B cell (primary cell): ENCODE measurements at regions of chr12 and their contacts with region 1.

Region 1: DNA sequence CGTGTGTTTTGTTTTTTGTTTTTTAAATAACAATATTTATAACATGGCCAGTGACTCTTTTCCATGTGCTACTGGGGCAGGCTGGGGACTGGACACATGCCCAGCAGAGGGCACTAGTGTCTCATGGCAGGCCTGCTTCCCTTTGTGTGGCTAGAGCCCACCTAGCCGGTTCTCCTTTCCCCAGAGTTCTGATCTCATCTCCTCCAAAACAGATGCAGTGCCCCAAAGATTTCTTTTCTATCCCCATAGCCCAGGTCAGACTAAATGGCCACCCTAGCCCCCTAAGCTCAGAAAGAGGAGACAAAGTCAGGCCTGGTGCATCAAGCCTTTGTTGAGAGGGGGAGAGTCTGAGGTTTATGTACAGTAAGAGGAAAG is 21.2 kb downstream of the PRPF40B start:
- DNase-seq: peak; percentile 89
- ATAC-seq: peak; percentile 97
- H3K4me3 ChIP-seq: no peak overlapping the region
- H3K4me3 Mint-ChIP-seq: peak overlapping the region; percentile 36
- H3K27ac ChIP-seq: peak overlapping the region in 1 of 2 donors; percentile 52
- H3K27ac Mint-ChIP-seq: peak overlapping the region; percentile 79
- H3K4me1 ChIP-seq: peaks cover 16 to 18% of the 10 kb centered on the region in 2 donors
- H3K4me1 Mint-ChIP-seq: peaks cover 18% of the 10 kb centered on the region
- H3K27me3 ChIP-seq: no peaks in the 10 kb centered on the region
- H3K27me3 Mint-ChIP-seq: no peaks in the 10 kb centered on the region
- CTCF ChIP-seq: peak; percentile 96

Region 2: DNA sequence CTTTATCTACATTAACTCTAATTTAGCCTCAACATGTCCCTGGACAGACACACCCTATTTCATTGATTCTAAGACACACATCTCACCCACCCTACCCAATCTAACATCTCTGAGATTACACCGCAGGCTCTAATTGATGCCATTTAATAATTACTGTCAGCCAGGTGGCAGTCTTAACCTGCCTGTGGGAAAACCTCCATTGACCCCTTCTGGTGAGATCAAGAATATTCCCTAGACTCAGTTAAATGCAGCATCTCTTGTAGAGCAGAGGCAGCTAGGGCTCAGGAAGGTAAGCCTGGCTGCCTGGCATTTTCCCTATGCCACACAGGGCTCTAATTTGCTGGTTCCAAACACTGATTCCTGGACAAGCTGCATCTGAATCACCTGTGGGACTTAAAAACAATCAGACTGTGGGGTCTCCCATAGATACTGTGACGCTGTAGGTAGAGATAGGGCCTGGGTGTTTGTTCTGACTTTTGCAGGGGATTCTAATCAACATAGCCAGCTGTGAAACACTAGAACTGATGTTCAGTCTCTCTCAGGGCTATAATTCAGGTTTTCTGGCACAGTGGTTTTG is 91.0 kb before region 1 on chr12:
- CTCF ChIA-PET with region 1: no interaction called
- POLR2A ChIA-PET with region 1: no interaction called
- intact Hi-C with region 1: no loop called
- DNase-seq: peak; percentile 63
- ATAC-seq: peak; percentile 51
- H3K4me3 ChIP-seq: no peak overlapping the region
- H3K4me3 Mint-ChIP-seq: no peak overlapping the region
- H3K27ac ChIP-seq: no peak overlapping the region
- H3K27ac Mint-ChIP-seq: no peak overlapping the region
- H3K4me1 ChIP-seq: peaks cover 7 to 9% of the 10 kb centered on the region in 2 donors
- H3K4me1 Mint-ChIP-seq: peaks cover 5% of the 10 kb centered on the region
- H3K27me3 ChIP-seq: peaks cover 0 to 17% (median 4%) of the 10 kb centered on the region in 4 experiments
- H3K27me3 Mint-ChIP-seq: peaks cover 7% of the 10 kb centered on the region
- CTCF ChIP-seq: peak; percentile 63

Region 3: GRCh38 chr12:49623142-49623904 is 21.3 kb before region 1 on chr12 and contains the start of gene PRPF40B:
- CTCF ChIA-PET with region 1: interaction called, 61 read pairs
- POLR2A ChIA-PET with region 1: interaction called, 3 read pairs
- intact Hi-C with region 1: loop called (anchors 1 kb)
- DNase-seq: peak; percentile 92
- ATAC-seq: peak; percentile 85
- H3K4me3 ChIP-seq: peak within 1 kb of the TSS; percentile 56 to 85 (median 73)
- H3K4me3 Mint-ChIP-seq: peak within 1 kb of the TSS; percentile 94
- H3K27ac ChIP-seq: peak within 1 kb of the TSS; percentile 56 to 65
- H3K27ac Mint-ChIP-seq: peak within 1 kb of the TSS; percentile 91
- H3K4me1 ChIP-seq: peaks cover 11 to 21% of the 10 kb centered on the region in 2 donors
- H3K4me1 Mint-ChIP-seq: peaks cover 19% of the 10 kb centered on the region
- H3K27me3 ChIP-seq: no peaks in the 10 kb centered on the region
- H3K27me3 Mint-ChIP-seq: no peaks in the 10 kb centered on the region
- CTCF ChIP-seq: peak; percentile 51
- total RNA-seq, gene PRPF40B: 23.6 and 23.7 TPM in 2 replicates

Region 4: GRCh38 chr12:49662998-49663843 is 18.6 kb after region 1 on chr12:
- CTCF ChIA-PET with region 1: interaction called, 164 read pairs
- POLR2A ChIA-PET with region 1: interaction called, 10 read pairs
- intact Hi-C with region 1: loop called (anchors 1 kb)
- DNase-seq: peak; percentile 84
- ATAC-seq: peak; percentile 89
- H3K4me3 ChIP-seq: peak overlapping the region; percentile 0 to 65 (median 36)
- H3K4me3 Mint-ChIP-seq: peak overlapping the region; percentile 85
- H3K27ac ChIP-seq: peak overlapping the region; percentile 78 to 95
- H3K27ac Mint-ChIP-seq: peak overlapping the region; percentile 97
- H3K4me1 ChIP-seq: peaks cover 77 to 86% of the 10 kb centered on the region in 2 donors
- H3K4me1 Mint-ChIP-seq: peaks cover 82% of the 10 kb centered on the region
- H3K27me3 ChIP-seq: no peaks in the 10 kb centered on the region
- H3K27me3 Mint-ChIP-seq: no peaks in the 10 kb centered on the region
- CTCF ChIP-seq: no peak

Region 5: DNA sequence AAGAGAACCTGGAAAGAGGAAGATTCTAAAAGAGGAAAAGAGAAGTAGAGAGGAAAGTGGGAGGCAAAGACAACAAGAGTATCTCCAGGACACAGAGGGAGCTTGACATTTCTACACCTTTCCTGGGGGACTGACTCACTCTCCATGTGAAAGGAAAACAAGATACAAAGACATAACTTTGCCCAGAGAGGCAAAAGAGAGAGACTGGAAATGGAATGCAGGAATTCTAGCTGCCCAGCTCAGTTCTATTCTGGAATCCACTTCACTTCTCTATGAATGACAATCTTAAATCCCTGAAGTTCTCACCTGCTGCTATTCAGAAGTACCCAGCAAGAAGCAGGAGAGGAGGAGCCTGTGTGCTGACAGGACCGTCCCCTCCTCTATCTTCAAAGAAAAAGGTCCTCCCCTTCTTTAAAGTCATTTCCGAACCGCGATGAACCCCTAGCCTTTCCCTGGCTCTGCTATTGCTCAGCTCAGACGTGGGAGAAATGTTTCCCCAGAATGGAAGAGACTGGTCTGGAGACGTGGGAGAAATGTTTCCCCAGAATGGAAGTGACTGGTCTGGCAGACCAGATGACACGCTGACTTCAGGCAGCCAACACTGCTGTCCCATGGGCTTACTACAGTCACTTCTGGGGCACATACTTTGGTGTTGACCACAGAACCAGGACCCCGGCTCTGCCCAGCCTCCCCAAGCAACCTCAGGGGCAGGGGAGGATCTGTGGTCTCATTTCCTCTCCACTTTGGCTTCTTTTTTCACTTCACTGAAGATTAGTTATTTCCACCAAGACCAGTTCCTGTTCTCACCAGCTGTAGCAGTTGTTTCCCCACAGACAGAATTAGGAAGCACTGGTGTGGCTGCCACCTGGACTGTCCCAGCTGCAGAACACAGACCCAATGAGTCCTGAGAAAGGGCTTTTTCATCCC is 54.3 kb after region 1 on chr12:
- CTCF ChIA-PET with region 1: interaction called, 372 read pairs
- POLR2A ChIA-PET with region 1: interaction called, 4 read pairs
- intact Hi-C with region 1: loop called (anchors 2 kb)
- DNase-seq: peak; percentile 80
- ATAC-seq: peak; percentile 84
- H3K4me3 ChIP-seq: peak overlapping the region; percentile 24 to 53 (median 42)
- H3K4me3 Mint-ChIP-seq: peak overlapping the region; percentile 89
- H3K27ac ChIP-seq: peak overlapping the region; percentile 62 to 85
- H3K27ac Mint-ChIP-seq: peak overlapping the region; percentile 92
- H3K4me1 ChIP-seq: peaks cover 70 to 72% of the 10 kb centered on the region in 2 donors
- H3K4me1 Mint-ChIP-seq: peaks cover 72% of the 10 kb centered on the region
- H3K27me3 ChIP-seq: no peaks in the 10 kb centered on the region
- H3K27me3 Mint-ChIP-seq: no peaks in the 10 kb centered on the region
- CTCF ChIP-seq: no peak

Region 6: DNA sequence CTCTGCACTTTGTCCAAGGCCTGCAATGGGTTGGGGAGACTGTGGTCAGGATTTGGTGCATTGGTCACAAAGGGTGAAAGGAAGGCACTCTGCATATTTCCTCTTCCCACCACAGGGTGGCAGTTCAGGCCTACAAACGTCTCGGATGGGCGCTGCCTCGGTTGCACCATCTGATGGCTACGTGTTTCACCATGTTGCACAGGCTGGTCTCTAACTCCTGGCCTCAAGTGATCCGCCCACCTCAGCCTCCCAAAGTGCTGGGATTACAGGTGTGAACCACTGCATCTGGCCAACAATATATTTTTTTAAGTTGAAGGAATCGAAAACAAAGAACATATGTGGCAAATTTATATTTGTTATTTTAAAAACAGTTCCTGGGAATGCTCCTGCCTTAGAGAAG is 131.8 kb after region 1 on chr12:
- CTCF ChIA-PET with region 1: interaction called, 9 read pairs
- POLR2A ChIA-PET with region 1: no interaction called
- intact Hi-C with region 1: loop called (anchors 1 kb)
- DNase-seq: peak; percentile 63
- ATAC-seq: peak; percentile 73
- H3K4me3 ChIP-seq: no peak overlapping the region
- H3K4me3 Mint-ChIP-seq: no peak overlapping the region
- H3K27ac ChIP-seq: no peak overlapping the region
- H3K27ac Mint-ChIP-seq: no peak overlapping the region
- H3K4me1 ChIP-seq: peaks cover 0 to 10% of the 10 kb centered on the region in 2 donors
- H3K4me1 Mint-ChIP-seq: peaks cover 11% of the 10 kb centered on the region
- H3K27me3 ChIP-seq: peaks cover 0 to 16% (median 5%) of the 10 kb centered on the region in 4 experiments
- H3K27me3 Mint-ChIP-seq: peaks cover 27% of the 10 kb centered on the region
- CTCF ChIP-seq: peak; percentile 70

Region 7: GRCh38 chr12:49842519-49843352 is 198.1 kb after region 1 on chr12 and contains the start of gene BCDIN3D:
- CTCF ChIA-PET with region 1: interaction called, 6 read pairs
- POLR2A ChIA-PET with region 1: no interaction called
- intact Hi-C with region 1: loop called (anchors 1 kb)
- DNase-seq: peak; percentile 93
- ATAC-seq: peak; percentile 93
- H3K4me3 ChIP-seq: peak within 1 kb of the TSS; percentile 70 to 99 (median 97)
- H3K4me3 Mint-ChIP-seq: peak within 1 kb of the TSS; percentile 94
- H3K27ac ChIP-seq: peak within 1 kb of the TSS; percentile 78 to 80
- H3K27ac Mint-ChIP-seq: peak within 1 kb of the TSS; percentile 96
- H3K4me1 ChIP-seq: peaks cover 12 to 28% of the 10 kb centered on the region in 2 donors
- H3K4me1 Mint-ChIP-seq: peaks cover 29% of the 10 kb centered on the region
- H3K27me3 ChIP-seq: no peaks in the 10 kb centered on the region
- H3K27me3 Mint-ChIP-seq: no peaks in the 10 kb centered on the region
- CTCF ChIP-seq: no peak
- total RNA-seq, gene BCDIN3D: 14.7 and 17.4 TPM in 2 replicates